Esophagus muscularis mucosa (tissue), 4 donors: ENCODE measurements at regions of chr2 and their contacts with region 1.

Region 1: GRCh38 chr2:130332271-130333073 is 10.2 kb upstream of the IMP4 start:
- DNase-seq: no peak
- H3K4me3 ChIP-seq: peak overlapping the region in 3 of 4 donors; percentile 4 to 28 (median 25)
- H3K27ac ChIP-seq: no peak overlapping the region
- H3K4me1 ChIP-seq: peaks cover 3 to 18% (median 12%) of the 10 kb centered on the region in 4 donors
- H3K27me3 ChIP-seq: peaks cover 0 to 30% (median 0%) of the 10 kb centered on the region in 4 donors
- CTCF ChIP-seq: peak; percentile 84 to 92 (median 86)
- EP300 ChIP-seq: no peak
- POLR2A ChIP-seq: no peak

Region 2: DNA sequence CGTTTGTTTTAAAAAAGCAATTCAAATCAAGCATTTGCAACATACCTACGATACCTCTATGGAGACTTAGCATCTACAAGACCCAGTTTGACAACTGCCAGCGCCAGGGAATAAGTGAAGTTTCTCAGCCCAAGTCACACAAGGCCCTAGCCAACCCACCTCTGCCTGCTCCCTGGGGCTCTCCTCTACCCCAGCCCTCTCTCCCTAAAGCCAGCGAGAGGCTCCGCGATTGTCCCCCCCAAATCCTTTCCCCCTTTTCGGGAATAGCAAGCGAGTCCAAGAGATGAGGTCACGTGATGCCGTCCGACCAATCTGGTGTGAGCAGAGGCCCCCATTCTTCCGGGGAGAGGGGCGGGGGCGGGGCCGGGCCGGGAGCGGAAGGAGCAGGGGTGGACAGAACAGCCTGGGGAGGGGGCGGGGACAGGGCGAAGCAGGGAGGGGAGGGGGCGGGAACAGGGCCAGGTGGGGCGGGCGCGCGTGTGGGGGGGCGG is 455.1 kb before region 1 on chr2:
- intact Hi-C with region 1: loop called (anchors 10 kb)
- DNase-seq: peak; percentile 99
- H3K4me3 ChIP-seq: peak overlapping the region; percentile 62 to 89 (median 76)
- H3K27ac ChIP-seq: peak overlapping the region; percentile 79 to 83 (median 82)
- H3K4me1 ChIP-seq: peaks cover 6 to 19% (median 15%) of the 10 kb centered on the region in 4 donors
- H3K27me3 ChIP-seq: no peaks in the 10 kb centered on the region
- CTCF ChIP-seq: no peak
- EP300 ChIP-seq: no peak
- POLR2A ChIP-seq: no peak

Region 3: GRCh38 chr2:129936334-129936934 is 396.0 kb before region 1 on chr2:
- intact Hi-C with region 1: loop called (anchors 5 kb)
- DNase-seq: no peak
- H3K4me3 ChIP-seq: no peak overlapping the region
- H3K27ac ChIP-seq: no peak overlapping the region
- H3K4me1 ChIP-seq: peaks cover 0 to 8% (median 5%) of the 10 kb centered on the region in 4 donors
- H3K27me3 ChIP-seq: peaks cover 0 to 61% (median 0%) of the 10 kb centered on the region in 4 donors
- CTCF ChIP-seq: no peak
- EP300 ChIP-seq: no peak
- POLR2A ChIP-seq: no peak

Region 4: GRCh38 chr2:129957911-129958310 is 374.6 kb before region 1 on chr2:
- intact Hi-C with region 1: no loop called
- DNase-seq: no peak
- H3K4me3 ChIP-seq: no peak overlapping the region
- H3K27ac ChIP-seq: no peak overlapping the region
- H3K4me1 ChIP-seq: no peaks in the 10 kb centered on the region
- H3K27me3 ChIP-seq: no peaks in the 10 kb centered on the region
- CTCF ChIP-seq: no peak
- EP300 ChIP-seq: no peak
- POLR2A ChIP-seq: no peak

Region 5: GRCh38 chr2:130183512-130184373 is 148.7 kb before region 1 on chr2:
- intact Hi-C with region 1: loop called (anchors 2 kb)
- DNase-seq: no peak
- H3K4me3 ChIP-seq: peak overlapping the region; percentile 69 to 96 (median 90)
- H3K27ac ChIP-seq: peak overlapping the region; percentile 72 to 96 (median 94)
- H3K4me1 ChIP-seq: peaks cover 24 to 40% (median 32%) of the 10 kb centered on the region in 4 donors
- H3K27me3 ChIP-seq: no peaks in the 10 kb centered on the region
- CTCF ChIP-seq: no peak
- EP300 ChIP-seq: no peak
- POLR2A ChIP-seq: no peak